Breast epithelium (tissue), 4 donors: ENCODE measurements at regions of chr7 and their contacts with region 1.

Region 1: DNA sequence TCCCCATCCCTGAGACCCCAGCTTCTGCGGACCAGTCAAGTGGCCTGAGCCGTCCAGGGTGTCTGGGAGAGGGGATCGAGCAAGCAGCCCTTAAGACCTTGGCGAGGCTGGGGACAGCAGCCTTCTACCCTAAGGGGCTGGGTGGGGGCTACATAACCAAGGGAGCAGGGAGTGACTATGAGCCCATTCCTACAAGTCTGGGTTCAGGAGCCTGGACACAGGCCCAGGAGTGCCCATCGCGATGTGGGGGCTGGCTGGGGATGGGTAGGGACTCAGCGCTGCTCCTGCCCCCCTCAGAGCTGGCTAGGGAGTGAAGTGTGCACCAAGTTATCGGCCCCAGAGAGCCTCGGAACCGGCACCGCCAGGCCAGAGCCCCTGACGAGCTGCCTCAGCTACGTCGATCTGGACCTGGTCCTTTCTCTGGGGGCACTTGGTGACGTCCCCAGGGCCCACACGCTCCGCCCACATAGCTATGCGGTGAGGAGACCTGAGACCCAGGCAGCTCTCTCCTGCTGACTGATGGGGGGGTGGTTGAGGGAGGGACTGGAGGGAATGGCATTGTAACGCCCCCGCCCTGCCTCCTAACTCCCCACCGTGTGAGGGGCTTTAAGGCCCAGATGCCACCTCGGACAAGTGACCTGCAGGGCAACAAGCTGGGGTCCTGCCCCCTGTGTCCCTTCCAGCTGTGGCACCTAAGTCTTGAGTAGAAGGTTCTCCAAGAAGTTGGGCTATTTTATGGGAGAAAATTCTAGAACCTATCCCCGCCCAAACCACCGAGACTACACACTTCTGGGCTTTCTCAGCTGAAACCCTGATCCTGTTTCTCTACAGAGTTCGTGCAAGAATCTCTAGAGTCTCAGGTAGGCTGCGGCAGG is 2.5 kb downstream of the SAP25 start:
- DNase-seq: no peak
- H3K4me3 ChIP-seq: no peak overlapping the region
- H3K27ac ChIP-seq: no peak overlapping the region
- H3K4me1 ChIP-seq: peaks cover 0 to 4% of the 10 kb centered on the region in 2 donors
- H3K27me3 ChIP-seq: no peaks in the 10 kb centered on the region
- CTCF ChIP-seq: no peak
- POLR2A ChIP-seq: no peak

Region 2: GRCh38 chr7:100680167-100680575 is 109.0 kb after region 1 on chr7:
- intact Hi-C with region 1: loop called (anchors 10 kb)
- DNase-seq: no peak
- H3K4me3 ChIP-seq: no peak overlapping the region
- H3K27ac ChIP-seq: peak overlapping the region in 1 of 2 donors; percentile 89
- H3K4me1 ChIP-seq: no peaks in the 10 kb centered on the region
- H3K27me3 ChIP-seq: no peaks in the 10 kb centered on the region
- CTCF ChIP-seq: no peak
- POLR2A ChIP-seq: no peak

Region 3: GRCh38 chr7:101717628-101718357 is 1146.6 kb after region 1 on chr7:
- intact Hi-C with region 1: loop called (anchors 5 kb)
- DNase-seq: no peak
- H3K4me3 ChIP-seq: no peak overlapping the region
- H3K27ac ChIP-seq: peak overlapping the region in 1 of 2 donors; percentile 19
- H3K4me1 ChIP-seq: no peaks in the 10 kb centered on the region
- H3K27me3 ChIP-seq: peaks cover 0 to 4% of the 10 kb centered on the region in 2 donors
- CTCF ChIP-seq: no peak
- POLR2A ChIP-seq: no peak

Region 4: GRCh38 chr7:101870351-101871062 is 1299.3 kb after region 1 on chr7:
- intact Hi-C with region 1: loop called (anchors 10 kb)
- DNase-seq: no peak
- H3K4me3 ChIP-seq: peak overlapping the region in 1 of 3 donors; percentile 0
- H3K27ac ChIP-seq: peak overlapping the region; percentile 30 to 56
- H3K4me1 ChIP-seq: no peaks in the 10 kb centered on the region
- H3K27me3 ChIP-seq: no peaks in the 10 kb centered on the region
- CTCF ChIP-seq: peak in 2 of 3 donors; percentile 13 to 28
- POLR2A ChIP-seq: no peak